B cell (primary cell): ENCODE measurements at regions of chr16 and their contacts with region 1.

Region 1: DNA sequence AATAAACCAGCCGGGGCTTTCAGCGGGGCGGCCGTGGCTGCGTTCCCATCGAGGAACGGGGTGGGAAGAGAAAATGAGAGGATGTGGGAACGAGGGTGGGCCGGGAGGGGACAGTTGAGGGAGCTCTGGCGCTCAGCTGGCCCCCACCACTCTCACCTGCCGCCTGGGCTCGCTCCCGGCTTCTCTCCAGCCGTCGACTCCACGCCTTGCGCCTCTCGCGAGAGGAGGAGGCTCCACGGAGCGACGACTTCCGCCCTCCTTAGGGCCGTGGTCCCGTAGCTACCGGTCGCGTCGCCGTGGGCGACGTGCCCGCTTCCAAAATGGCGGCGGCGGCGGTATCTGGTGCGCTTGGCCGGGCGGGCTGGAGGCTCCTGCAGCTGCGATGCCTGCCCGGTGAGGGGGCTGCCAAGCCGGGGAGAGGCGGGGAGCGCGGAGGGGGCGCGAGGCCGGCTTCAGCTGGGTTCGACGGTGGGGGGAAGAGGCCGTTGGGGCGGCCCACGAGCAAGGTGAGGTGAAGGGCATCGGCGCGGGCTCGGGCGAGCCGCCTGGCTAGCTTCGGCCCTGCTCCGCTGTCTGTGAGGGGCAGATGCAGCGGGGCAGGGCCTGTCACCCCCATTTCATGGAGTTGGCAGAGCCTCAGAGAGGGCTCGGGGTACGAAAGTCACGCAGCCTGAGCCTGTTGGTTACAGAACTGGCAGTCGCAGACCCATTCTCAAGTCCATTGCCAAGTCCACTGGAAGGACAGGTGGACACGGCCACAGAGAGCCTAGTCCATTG is at the starts of genes CIAPIN1 and COQ9:
- DNase-seq: peak; percentile 94
- ATAC-seq: peak; percentile 98
- H3K4me3 ChIP-seq: peak within 1 kb of the TSS; percentile 67 to 96 (median 83)
- H3K4me3 Mint-ChIP-seq: peak within 1 kb of the TSS; percentile 94
- H3K27ac ChIP-seq: peak within 1 kb of the TSS; percentile 68 to 92
- H3K27ac Mint-ChIP-seq: peak within 1 kb of the TSS; percentile 91
- H3K4me1 ChIP-seq: peaks cover 16% of the 10 kb centered on the region in 2 donors
- H3K4me1 Mint-ChIP-seq: peaks cover 28% of the 10 kb centered on the region
- H3K27me3 ChIP-seq: no peaks in the 10 kb centered on the region
- H3K27me3 Mint-ChIP-seq: no peaks in the 10 kb centered on the region
- CTCF ChIP-seq: no peak
- total RNA-seq, gene CIAPIN1: 38.1 and 45.7 TPM in 2 replicates
- total RNA-seq, gene COQ9: 41.5 and 44.6 TPM in 2 replicates

Region 2: GRCh38 chr16:57265850-57266530 is 181.4 kb before region 1 on chr16:
- CTCF ChIA-PET with region 1: no interaction called
- POLR2A ChIA-PET with region 1: no interaction called
- intact Hi-C with region 1: no loop called
- DNase-seq: no peak
- ATAC-seq: no peak
- H3K4me3 ChIP-seq: no peak overlapping the region
- H3K4me3 Mint-ChIP-seq: no peak overlapping the region
- H3K27ac ChIP-seq: no peak overlapping the region
- H3K27ac Mint-ChIP-seq: no peak overlapping the region
- H3K4me1 ChIP-seq: peaks cover 0 to 5% of the 10 kb centered on the region in 2 donors
- H3K4me1 Mint-ChIP-seq: peaks cover 3% of the 10 kb centered on the region
- H3K27me3 ChIP-seq: no peaks in the 10 kb centered on the region
- H3K27me3 Mint-ChIP-seq: no peaks in the 10 kb centered on the region
- CTCF ChIP-seq: no peak

Region 3: GRCh38 chr16:57300387-57301125 is 146.8 kb before region 1 on chr16:
- CTCF ChIA-PET with region 1: interaction called, 14 read pairs
- POLR2A ChIA-PET with region 1: no interaction called
- intact Hi-C with region 1: loop called (anchors 1 kb)
- DNase-seq: peak; percentile 100
- ATAC-seq: peak; percentile 93
- H3K4me3 ChIP-seq: peak overlapping the region; percentile 59 to 89 (median 71)
- H3K4me3 Mint-ChIP-seq: no peak overlapping the region
- H3K27ac ChIP-seq: peak overlapping the region; percentile 76 to 85
- H3K27ac Mint-ChIP-seq: no peak overlapping the region
- H3K4me1 ChIP-seq: peaks cover 14 to 31% of the 10 kb centered on the region in 2 donors
- H3K4me1 Mint-ChIP-seq: peaks cover 19% of the 10 kb centered on the region
- H3K27me3 ChIP-seq: no peaks in the 10 kb centered on the region
- H3K27me3 Mint-ChIP-seq: no peaks in the 10 kb centered on the region
- CTCF ChIP-seq: peak; percentile 92

Region 4: GRCh38 chr16:57462209-57462977 is 15.0 kb after region 1 on chr16 and contains the start of gene POLR2C:
- CTCF ChIA-PET with region 1: interaction called, 28 read pairs
- POLR2A ChIA-PET with region 1: interaction called, 11 read pairs
- intact Hi-C with region 1: loop called (anchors 1 kb)
- DNase-seq: peak; percentile 93
- ATAC-seq: peak; percentile 98
- H3K4me3 ChIP-seq: peak within 1 kb of the TSS; percentile 59 to 88 (median 82)
- H3K4me3 Mint-ChIP-seq: peak within 1 kb of the TSS; percentile 100
- H3K27ac ChIP-seq: peak within 1 kb of the TSS; percentile 42 to 59
- H3K27ac Mint-ChIP-seq: peak within 1 kb of the TSS; percentile 99
- H3K4me1 ChIP-seq: peaks cover 12% of the 10 kb centered on the region in 2 donors
- H3K4me1 Mint-ChIP-seq: peaks cover 29% of the 10 kb centered on the region
- H3K27me3 ChIP-seq: no peaks in the 10 kb centered on the region
- H3K27me3 Mint-ChIP-seq: no peaks in the 10 kb centered on the region
- CTCF ChIP-seq: peak; percentile 95
- total RNA-seq, gene POLR2C: 57.8 and 61.6 TPM in 2 replicates

Region 5: DNA sequence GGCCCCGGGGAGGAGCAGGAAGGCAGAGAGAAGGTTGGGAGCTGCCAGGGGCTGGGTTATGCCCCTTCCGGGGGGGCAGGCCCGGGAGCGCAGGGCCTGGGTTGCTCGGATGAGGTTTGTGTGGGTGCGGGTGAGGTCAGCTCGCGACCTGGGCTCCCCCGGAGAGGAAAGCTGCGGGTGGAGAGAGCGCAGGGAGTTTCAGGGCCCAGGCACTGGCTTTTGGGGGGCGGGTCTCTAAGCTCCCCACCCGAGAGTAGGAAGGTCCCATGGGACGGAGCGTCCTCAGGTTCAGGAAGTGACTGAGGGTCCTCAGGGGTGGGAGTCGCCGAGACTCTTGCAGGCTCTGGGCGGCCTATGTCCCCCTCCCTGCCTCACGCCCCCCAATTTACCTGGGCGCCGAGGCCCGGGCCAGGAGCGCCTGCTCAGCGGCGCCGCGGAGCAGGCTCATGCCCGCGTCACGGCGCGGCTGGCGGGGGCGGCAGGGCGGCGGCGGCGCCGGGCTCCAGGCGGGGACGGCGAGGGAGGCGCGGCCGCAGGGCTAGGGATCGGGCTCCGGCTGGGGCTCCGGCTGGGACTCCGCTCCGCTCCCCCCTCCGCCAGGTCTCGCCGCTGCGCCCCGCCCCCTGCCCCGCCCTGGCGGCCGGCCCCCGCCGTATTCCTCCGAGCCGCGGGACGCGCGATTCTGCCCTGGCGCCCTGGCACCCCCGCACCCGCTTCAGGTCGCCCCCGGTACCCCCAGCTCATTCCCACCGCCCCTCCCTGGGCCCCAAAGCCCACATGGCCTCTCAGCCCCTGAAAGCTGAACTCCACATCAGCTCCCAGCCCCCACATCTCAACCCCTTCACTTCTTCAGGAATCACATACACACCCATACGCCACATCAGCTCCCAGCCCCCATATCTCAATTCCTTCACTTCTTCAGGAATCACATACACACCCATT is 38.8 kb after region 1 on chr16 and contains the start of gene DOK4:
- CTCF ChIA-PET with region 1: no interaction called
- POLR2A ChIA-PET with region 1: no interaction called
- intact Hi-C with region 1: loop called (anchors 1 kb)
- DNase-seq: peak; percentile 77
- ATAC-seq: peak; percentile 93
- H3K4me3 ChIP-seq: peak within 1 kb of the TSS; percentile 22 to 68 (median 56)
- H3K4me3 Mint-ChIP-seq: peak within 1 kb of the TSS; percentile 85
- H3K27ac ChIP-seq: no peak within 1 kb of the TSS
- H3K27ac Mint-ChIP-seq: no peak within 1 kb of the TSS
- H3K4me1 ChIP-seq: peaks cover 11 to 15% of the 10 kb centered on the region in 2 donors
- H3K4me1 Mint-ChIP-seq: peaks cover 16% of the 10 kb centered on the region
- H3K27me3 ChIP-seq: peaks cover 0 to 12% (median 3%) of the 10 kb centered on the region in 4 experiments
- H3K27me3 Mint-ChIP-seq: peaks cover 6% of the 10 kb centered on the region
- CTCF ChIP-seq: no peak
- total RNA-seq, gene DOK4: 0.73 and 1.6 TPM in 2 replicates

Region 6: GRCh38 chr16:57535680-57536305 is 88.4 kb after region 1 on chr16:
- CTCF ChIA-PET with region 1: no interaction called
- POLR2A ChIA-PET with region 1: interaction called, 5 read pairs
- intact Hi-C with region 1: loop called (anchors 2 kb)
- DNase-seq: peak; percentile 95
- ATAC-seq: peak; percentile 76
- H3K4me3 ChIP-seq: peak overlapping the region in 4 of 5 experiments; percentile 56 to 73 (median 70)
- H3K4me3 Mint-ChIP-seq: peak overlapping the region; percentile 89
- H3K27ac ChIP-seq: peak overlapping the region; percentile 90 to 94
- H3K27ac Mint-ChIP-seq: peak overlapping the region; percentile 96
- H3K4me1 ChIP-seq: peaks cover 86 to 91% of the 10 kb centered on the region in 2 donors
- H3K4me1 Mint-ChIP-seq: peaks cover 79% of the 10 kb centered on the region
- H3K27me3 ChIP-seq: no peaks in the 10 kb centered on the region
- H3K27me3 Mint-ChIP-seq: no peaks in the 10 kb centered on the region
- CTCF ChIP-seq: peak; percentile 29

Region 7: GRCh38 chr16:58129097-58129936 is 681.9 kb after region 1 on chr16 and contains the start of gene CFAP20:
- CTCF ChIA-PET with region 1: no interaction called
- POLR2A ChIA-PET with region 1: no interaction called
- intact Hi-C with region 1: loop called (anchors 2 kb)
- DNase-seq: peak; percentile 99
- ATAC-seq: peak; percentile 93
- H3K4me3 ChIP-seq: peak within 1 kb of the TSS; percentile 66 to 98 (median 75)
- H3K4me3 Mint-ChIP-seq: peak within 1 kb of the TSS; percentile 89
- H3K27ac ChIP-seq: peak within 1 kb of the TSS; percentile 78 to 91
- H3K27ac Mint-ChIP-seq: peak within 1 kb of the TSS; percentile 93
- H3K4me1 ChIP-seq: peaks cover 30 to 36% of the 10 kb centered on the region in 2 donors
- H3K4me1 Mint-ChIP-seq: peaks cover 45% of the 10 kb centered on the region
- H3K27me3 ChIP-seq: no peaks in the 10 kb centered on the region
- H3K27me3 Mint-ChIP-seq: no peaks in the 10 kb centered on the region
- CTCF ChIP-seq: no peak
- total RNA-seq, gene CFAP20: 26.1 and 27.3 TPM in 2 replicates